Colonic mucosa (tissue), 4 donors: ENCODE measurements at regions of chr17 and their contacts with region 1.

Region 1: GRCh38 chr17:45197555-45198334 is 23.9 kb upstream of the FMNL1 start:
- DNase-seq: peak; percentile 95
- H3K4me3 ChIP-seq: no peak overlapping the region
- H3K27ac ChIP-seq: no peak overlapping the region
- H3K4me1 ChIP-seq: no peaks in the 10 kb centered on the region
- H3K27me3 ChIP-seq: no peaks in the 10 kb centered on the region
- CTCF ChIP-seq: peak; percentile 99

Region 2: DNA sequence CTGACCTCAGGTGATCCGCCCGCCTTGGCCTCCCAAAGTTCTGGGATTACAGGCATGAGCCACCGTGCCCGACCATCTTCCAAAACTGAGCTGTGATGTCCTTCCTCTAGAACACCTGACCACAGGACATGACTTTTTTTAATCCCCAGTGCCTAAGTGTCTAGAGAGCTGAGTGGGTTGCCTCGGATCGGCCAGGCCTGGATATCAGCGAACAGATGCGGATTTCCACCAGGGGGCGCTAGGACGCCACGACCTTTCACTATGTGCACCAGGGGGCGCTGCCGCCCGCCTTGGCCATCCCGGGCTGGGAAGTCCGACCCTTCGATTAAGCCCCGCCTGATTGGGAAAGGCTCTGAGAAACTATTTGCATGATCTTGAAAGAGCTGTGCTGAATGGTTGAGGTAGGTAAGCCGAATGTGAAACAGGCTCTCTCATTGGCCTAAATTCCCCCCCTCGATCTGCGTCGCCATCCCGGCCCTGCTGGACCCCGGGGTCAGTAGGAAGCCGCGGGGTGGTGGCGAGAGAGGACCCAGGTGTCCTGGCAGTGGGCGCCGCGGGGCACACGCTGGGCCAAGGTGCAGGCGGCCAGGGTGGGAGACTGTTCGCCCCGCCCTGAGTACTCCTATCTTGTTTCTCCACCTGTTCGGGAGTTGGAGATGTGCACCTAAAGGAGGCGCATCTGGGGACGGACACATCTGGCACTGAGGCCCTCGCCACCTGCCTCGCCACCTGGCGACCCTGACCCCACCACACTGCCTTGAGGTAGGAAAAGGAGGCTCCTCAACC is 62.4 kb before region 1 on chr17 and contains the start of gene ACBD4:
- intact Hi-C with region 1: loop called (anchors 2 kb)
- DNase-seq: peak; percentile 97
- H3K4me3 ChIP-seq: peak within 1 kb of the TSS; percentile 82
- H3K27ac ChIP-seq: peak within 1 kb of the TSS; percentile 65
- H3K4me1 ChIP-seq: peaks cover 10% of the 10 kb centered on the region
- H3K27me3 ChIP-seq: no peaks in the 10 kb centered on the region
- CTCF ChIP-seq: peak; percentile 100
- total RNA-seq, gene ACBD4: 13.0 to 16.6 TPM